ENCODE measurements at regions of chr2 and their contacts with region 1.

Region 1: GRCh38 chr2:45935791-45936622 is 284.5 kb downstream of the PRKCE start:
- DNase-seq: no peak
- ATAC-seq: peak; percentile 94
- H3K4me3 ChIP-seq: no peak overlapping the region
- H3K27ac ChIP-seq: peak overlapping the region; percentile 48
- H3K4me1 ChIP-seq: peaks cover 7% of the 10 kb centered on the region
- H3K27me3 ChIP-seq: no peaks in the 10 kb centered on the region
- CTCF ChIP-seq: peak; percentile 67 to 91 (median 70)
- EP300 ChIP-seq: no peak
- POLR2A ChIP-seq: no peak
- RAD21 ChIP-seq: peak; percentile 95

Region 2: DNA sequence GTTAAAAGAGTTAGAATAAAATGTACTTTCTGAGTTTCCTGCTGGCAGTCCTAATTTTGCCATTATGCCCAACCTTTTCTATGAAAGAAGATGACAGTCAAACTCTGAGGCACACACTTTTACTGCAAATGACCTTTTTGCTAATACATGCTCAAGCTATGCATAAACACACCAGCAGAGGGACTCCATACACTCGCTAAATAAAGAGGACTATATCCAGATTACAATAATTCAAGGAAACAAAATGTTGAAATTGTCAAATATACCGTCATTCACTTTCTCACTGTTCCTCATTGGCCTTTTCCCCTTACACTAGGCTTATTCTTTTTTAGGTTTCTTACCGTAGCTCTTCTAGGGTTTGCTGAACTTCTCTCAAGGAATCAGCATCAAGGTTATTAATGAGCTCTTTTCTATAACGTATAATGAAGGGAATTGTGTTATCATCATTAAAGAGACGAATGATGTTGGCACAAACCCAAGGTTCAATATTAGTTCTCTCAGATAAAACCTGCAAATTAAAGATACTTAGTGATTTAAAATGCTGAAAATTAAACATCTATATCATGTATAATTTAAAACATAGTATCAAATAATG is 350.6 kb before region 1 on chr2:
- CTCF ChIA-PET with region 1: interaction called, 8 read pairs
- POLR2A ChIA-PET with region 1: no interaction called
- RAD21 ChIA-PET with region 1: interaction called, 6 read pairs
- SMC1A ChIA-PET with region 1: interaction called, 15 read pairs
- in situ Hi-C with region 1: no loop called
- intact Hi-C with region 1: no loop called
- DNase-seq: no peak
- ATAC-seq: peak; percentile 86
- H3K4me3 ChIP-seq: no peak overlapping the region
- H3K27ac ChIP-seq: no peak overlapping the region
- H3K4me1 ChIP-seq: no peaks in the 10 kb centered on the region
- H3K27me3 ChIP-seq: no peaks in the 10 kb centered on the region
- CTCF ChIP-seq: peak; percentile 50 to 69 (median 66)
- EP300 ChIP-seq: no peak
- POLR2A ChIP-seq: no peak
- RAD21 ChIP-seq: peak; percentile 56

Region 3: GRCh38 chr2:45650851-45651414 is 285.1 kb before region 1 on chr2:
- CTCF ChIA-PET with region 1: interaction called, 64 read pairs
- POLR2A ChIA-PET with region 1: interaction called, 3 read pairs
- RAD21 ChIA-PET with region 1: interaction called, 17 read pairs
- SMC1A ChIA-PET with region 1: interaction called, 56 read pairs
- in situ Hi-C with region 1: loop called (anchors 5 kb)
- intact Hi-C with region 1: no loop called
- DNase-seq: peak; percentile 76
- ATAC-seq: peak; percentile 79
- H3K4me3 ChIP-seq: peak overlapping the region; percentile 97
- H3K27ac ChIP-seq: peak overlapping the region; percentile 91
- H3K4me1 ChIP-seq: no peaks in the 10 kb centered on the region
- H3K27me3 ChIP-seq: no peaks in the 10 kb centered on the region
- CTCF ChIP-seq: peak; percentile 38 to 49 (median 48); a peak in 5 of 6 replicates
- EP300 ChIP-seq: peak; percentile 56 to 69; a peak in 1 of 4 replicates
- POLR2A ChIP-seq: peak; percentile 85
- RAD21 ChIP-seq: peak; percentile 57

Region 4: DNA sequence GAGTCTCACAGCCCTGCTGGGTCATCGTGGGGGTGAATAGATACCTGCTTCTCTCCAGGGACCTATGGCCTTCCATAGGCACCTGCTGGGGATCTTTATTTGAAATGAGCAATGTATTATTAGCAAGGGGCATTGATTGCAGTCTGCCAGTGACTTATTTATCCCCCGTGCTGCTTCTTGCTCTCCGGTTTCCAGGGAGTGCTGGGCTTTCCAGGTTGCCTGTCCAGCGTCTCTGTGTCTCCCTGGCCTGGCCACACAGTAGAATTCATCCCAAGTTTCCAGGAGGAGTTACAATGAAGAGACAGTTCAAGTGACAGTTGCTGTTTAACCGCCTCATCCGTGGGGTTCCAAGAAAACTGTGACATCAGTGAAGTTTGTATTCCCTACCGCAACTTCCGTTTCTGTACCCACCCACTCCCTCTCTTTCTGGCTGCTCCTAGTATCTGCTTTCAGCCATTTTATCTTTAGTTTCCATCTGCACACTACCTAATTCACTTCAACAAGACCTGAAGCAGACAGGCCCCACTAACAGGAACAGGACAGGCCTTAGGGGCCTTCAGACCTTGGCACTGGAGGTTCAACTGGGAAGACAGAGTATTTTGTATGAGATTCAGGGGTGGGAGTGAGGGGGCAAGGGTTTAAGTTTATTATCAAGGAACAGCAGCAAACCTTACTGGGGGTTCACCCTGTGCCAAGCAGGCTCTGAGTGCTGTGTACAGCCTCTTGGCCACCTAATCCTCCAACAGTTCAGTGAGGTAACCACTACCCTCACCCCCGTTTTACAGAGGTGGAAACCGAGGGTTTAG is 149.8 kb before region 1 on chr2:
- CTCF ChIA-PET with region 1: interaction called, 28 read pairs
- POLR2A ChIA-PET with region 1: no interaction called
- RAD21 ChIA-PET with region 1: interaction called, 5 read pairs
- SMC1A ChIA-PET with region 1: interaction called, 13 read pairs
- in situ Hi-C with region 1: no loop called
- intact Hi-C with region 1: no loop called
- DNase-seq: no peak
- ATAC-seq: no peak
- H3K4me3 ChIP-seq: no peak overlapping the region
- H3K27ac ChIP-seq: no peak overlapping the region
- H3K4me1 ChIP-seq: peaks cover 12% of the 10 kb centered on the region
- H3K27me3 ChIP-seq: no peaks in the 10 kb centered on the region
- CTCF ChIP-seq: no peak
- EP300 ChIP-seq: no peak
- POLR2A ChIP-seq: no peak
- RAD21 ChIP-seq: no peak

Region 5: DNA sequence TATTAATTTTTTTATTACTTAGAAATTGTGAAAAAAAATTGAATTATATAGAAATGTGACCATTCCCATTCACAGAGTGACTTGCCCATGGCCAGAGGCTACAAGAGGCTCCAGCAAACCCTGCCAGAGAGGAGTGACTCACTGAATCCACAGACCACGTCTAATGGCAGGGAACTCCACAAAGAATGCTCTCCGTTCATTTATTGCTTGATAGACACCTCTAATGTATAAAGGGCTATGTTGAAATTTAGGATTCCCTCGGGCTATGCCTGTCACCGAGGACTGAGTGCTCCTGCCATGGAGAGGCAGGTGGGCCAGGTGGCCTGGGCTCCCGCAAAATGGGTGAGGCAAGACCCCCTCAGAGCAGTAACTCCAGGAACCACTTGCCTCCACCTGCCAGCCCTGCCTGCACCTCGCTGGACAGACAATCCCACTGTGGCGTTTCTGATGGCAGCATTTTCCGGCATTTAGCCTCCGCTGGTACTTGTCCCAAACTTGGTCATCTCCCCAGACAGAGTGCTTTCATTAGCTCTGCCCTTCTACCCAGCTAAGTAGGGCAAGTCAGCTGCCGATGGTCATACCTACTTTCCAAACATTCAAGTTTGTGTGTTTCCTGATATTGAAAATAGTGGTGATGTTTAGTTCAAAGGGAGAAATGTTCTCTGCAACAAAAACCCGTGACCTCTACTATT is 84.2 kb before region 1 on chr2:
- CTCF ChIA-PET with region 1: interaction called, 10 read pairs
- POLR2A ChIA-PET with region 1: no interaction called
- RAD21 ChIA-PET with region 1: interaction called, 6 read pairs
- SMC1A ChIA-PET with region 1: interaction called, 3 read pairs
- in situ Hi-C with region 1: no loop called
- intact Hi-C with region 1: no loop called
- DNase-seq: no peak
- ATAC-seq: no peak
- H3K4me3 ChIP-seq: no peak overlapping the region
- H3K27ac ChIP-seq: no peak overlapping the region
- H3K4me1 ChIP-seq: peaks cover 27% of the 10 kb centered on the region
- H3K27me3 ChIP-seq: no peaks in the 10 kb centered on the region
- CTCF ChIP-seq: no peak
- EP300 ChIP-seq: no peak
- POLR2A ChIP-seq: no peak
- RAD21 ChIP-seq: no peak

Region 6: GRCh38 chr2:45879406-45879805 is 56.6 kb before region 1 on chr2:
- CTCF ChIA-PET with region 1: interaction called, 12 read pairs
- POLR2A ChIA-PET with region 1: no interaction called
- RAD21 ChIA-PET with region 1: interaction called, 7 read pairs
- SMC1A ChIA-PET with region 1: interaction called, 4 read pairs
- in situ Hi-C with region 1: no loop called
- intact Hi-C with region 1: no loop called
- DNase-seq: no peak
- ATAC-seq: peak; percentile 77
- H3K4me3 ChIP-seq: no peak overlapping the region
- H3K27ac ChIP-seq: no peak overlapping the region
- H3K4me1 ChIP-seq: peaks cover 9% of the 10 kb centered on the region
- H3K27me3 ChIP-seq: no peaks in the 10 kb centered on the region
- CTCF ChIP-seq: peak; percentile 13 to 47 (median 37); a peak in 3 of 6 replicates
- EP300 ChIP-seq: no peak
- POLR2A ChIP-seq: no peak
- RAD21 ChIP-seq: no peak

Region 7: GRCh38 chr2:45922571-45922988 is 13.4 kb before region 1 on chr2:
- CTCF ChIA-PET with region 1: interaction called, 20 read pairs
- POLR2A ChIA-PET with region 1: interaction called, 3 read pairs
- RAD21 ChIA-PET with region 1: interaction called, 16 read pairs
- SMC1A ChIA-PET with region 1: interaction called, 26 read pairs
- in situ Hi-C with region 1: no loop called
- intact Hi-C with region 1: no loop called
- DNase-seq: no peak
- ATAC-seq: no peak
- H3K4me3 ChIP-seq: no peak overlapping the region
- H3K27ac ChIP-seq: no peak overlapping the region
- H3K4me1 ChIP-seq: peaks cover 22% of the 10 kb centered on the region
- H3K27me3 ChIP-seq: no peaks in the 10 kb centered on the region
- CTCF ChIP-seq: no peak
- EP300 ChIP-seq: no peak
- POLR2A ChIP-seq: no peak
- RAD21 ChIP-seq: no peak

Region 8: GRCh38 chr2:46555011-46555410 is 619.0 kb after region 1 on chr2:
- CTCF ChIA-PET with region 1: no interaction called
- POLR2A ChIA-PET with region 1: no interaction called
- RAD21 ChIA-PET with region 1: no interaction called
- SMC1A ChIA-PET with region 1: no interaction called
- in situ Hi-C with region 1: no loop called
- intact Hi-C with region 1: no loop called
- DNase-seq: no peak
- ATAC-seq: peak; percentile 71
- H3K4me3 ChIP-seq: no peak overlapping the region
- H3K27ac ChIP-seq: no peak overlapping the region
- H3K4me1 ChIP-seq: peaks cover 23% of the 10 kb centered on the region
- H3K27me3 ChIP-seq: no peaks in the 10 kb centered on the region
- CTCF ChIP-seq: peak; percentile 31 to 60 (median 48)
- EP300 ChIP-seq: no peak
- POLR2A ChIP-seq: no peak
- RAD21 ChIP-seq: peak; percentile 12; the same call in 1 of the 2 replicates